ENCODE measurements at regions of chr3 and their contacts with region 1.

Region 1: GRCh38 chr3:183884427-183885296 is at the start of gene PARL:
- DNase-seq: peak; percentile 91 to 96 (median 93)
- H3K4me3 ChIP-seq: peak within 1 kb of the TSS; percentile 94
- H3K4me3 Mint-ChIP-seq: peak within 1 kb of the TSS; percentile 86 to 97 (median 90)
- H3K27ac ChIP-seq: peak within 1 kb of the TSS; percentile 81
- H3K27ac Mint-ChIP-seq: peak within 1 kb of the TSS; percentile 73 to 96 (median 88)
- H3K4me1 ChIP-seq: peaks cover 23% of the 10 kb centered on the region
- H3K4me1 Mint-ChIP-seq: peaks cover 38 to 50% (median 48%) of the 10 kb centered on the region in 3 donors
- H3K27me3 ChIP-seq: no peaks in the 10 kb centered on the region
- H3K27me3 Mint-ChIP-seq: peaks cover 0 to 2% of the 10 kb centered on the region in 2 donors
- total RNA-seq, gene PARL: 95.9 to 98.1 TPM

Region 2: DNA sequence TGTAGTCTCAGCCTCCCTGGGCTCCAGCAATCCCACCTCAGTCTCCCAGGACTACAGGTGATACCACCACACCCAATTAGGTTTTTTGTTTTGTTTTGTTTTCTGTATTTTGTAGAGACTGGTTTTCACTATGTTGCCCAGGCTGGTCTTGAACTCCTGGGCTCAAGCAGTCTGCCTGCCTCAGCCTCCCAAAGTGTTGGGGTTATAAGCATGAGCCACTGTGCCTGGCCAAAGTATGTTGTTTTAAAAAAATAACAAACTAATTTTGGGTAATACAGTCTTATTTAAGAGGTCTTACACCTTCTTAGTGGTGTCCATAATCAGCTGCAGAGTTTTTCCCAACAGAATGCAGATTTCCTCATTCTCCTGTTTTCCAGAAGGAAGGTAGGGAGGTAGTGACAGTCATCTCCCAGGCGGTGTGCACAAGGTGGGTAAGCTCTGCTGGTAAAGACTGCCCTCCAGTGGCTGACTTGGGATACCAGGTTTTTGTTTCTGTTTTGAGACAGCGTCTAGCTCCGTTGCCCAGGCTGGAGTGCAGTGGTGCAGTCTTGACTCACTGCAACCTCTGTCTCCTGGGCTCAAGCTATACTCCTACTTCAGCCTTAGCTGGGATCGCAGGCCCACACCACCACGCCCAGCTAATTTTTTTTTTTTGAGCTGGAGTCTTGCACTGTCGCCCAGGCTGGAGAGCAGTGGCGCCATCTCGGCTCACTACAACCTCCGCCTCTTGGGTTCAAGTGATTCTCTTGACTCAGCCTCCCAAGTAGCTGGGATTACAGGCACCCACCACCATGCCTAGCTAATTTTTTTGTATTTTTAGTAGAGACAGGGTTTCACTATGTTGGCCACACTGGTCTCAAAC is 117.7 kb before region 1 on chr3:
- CTCF ChIA-PET with region 1: interaction called, 12 read pairs
- POLR2A ChIA-PET with region 1: no interaction called
- DNase-seq: peak; percentile 52 to 77 (median 57)
- H3K4me3 ChIP-seq: no peak overlapping the region
- H3K4me3 Mint-ChIP-seq: no peak overlapping the region
- H3K27ac ChIP-seq: no peak overlapping the region
- H3K27ac Mint-ChIP-seq: peak overlapping the region in 5 of 8 donors; percentile 15 to 81 (median 40)
- H3K4me1 ChIP-seq: no peaks in the 10 kb centered on the region
- H3K4me1 Mint-ChIP-seq: peaks cover 9 to 15% (median 12%) of the 10 kb centered on the region in 3 donors
- H3K27me3 ChIP-seq: no peaks in the 10 kb centered on the region
- H3K27me3 Mint-ChIP-seq: no peaks in the 10 kb centered on the region

Region 3: DNA sequence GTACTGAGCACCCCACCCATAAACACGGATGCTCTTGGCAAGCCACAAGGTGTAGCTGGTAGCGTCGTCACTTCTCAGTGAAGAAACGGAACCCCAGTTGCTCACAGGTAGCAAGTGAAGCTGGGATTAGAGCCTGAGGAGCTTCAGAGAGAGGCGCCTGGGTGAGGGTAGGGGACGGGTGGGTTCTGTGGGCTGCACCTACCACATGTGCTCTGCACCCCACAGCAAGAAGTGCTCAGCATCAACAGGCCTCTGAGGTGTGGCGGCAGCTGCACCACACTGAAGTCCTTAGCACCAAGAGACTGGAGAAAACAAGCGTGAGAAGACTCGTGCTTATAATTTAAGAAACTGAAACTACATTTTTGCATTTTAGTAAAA is 69.1 kb before region 1 on chr3:
- CTCF ChIA-PET with region 1: interaction called, 13 read pairs
- POLR2A ChIA-PET with region 1: no interaction called
- DNase-seq: peak in 2 of 5 donors; percentile 22 to 61
- H3K4me3 ChIP-seq: peak overlapping the region; percentile 15
- H3K4me3 Mint-ChIP-seq: peak overlapping the region; percentile 44 to 81 (median 75)
- H3K27ac ChIP-seq: peak overlapping the region; percentile 51
- H3K27ac Mint-ChIP-seq: peak overlapping the region; percentile 77 to 96 (median 90)
- H3K4me1 ChIP-seq: peaks cover 13% of the 10 kb centered on the region
- H3K4me1 Mint-ChIP-seq: peaks cover 19 to 28% (median 24%) of the 10 kb centered on the region in 3 donors
- H3K27me3 ChIP-seq: no peaks in the 10 kb centered on the region
- H3K27me3 Mint-ChIP-seq: no peaks in the 10 kb centered on the region

Region 4: DNA sequence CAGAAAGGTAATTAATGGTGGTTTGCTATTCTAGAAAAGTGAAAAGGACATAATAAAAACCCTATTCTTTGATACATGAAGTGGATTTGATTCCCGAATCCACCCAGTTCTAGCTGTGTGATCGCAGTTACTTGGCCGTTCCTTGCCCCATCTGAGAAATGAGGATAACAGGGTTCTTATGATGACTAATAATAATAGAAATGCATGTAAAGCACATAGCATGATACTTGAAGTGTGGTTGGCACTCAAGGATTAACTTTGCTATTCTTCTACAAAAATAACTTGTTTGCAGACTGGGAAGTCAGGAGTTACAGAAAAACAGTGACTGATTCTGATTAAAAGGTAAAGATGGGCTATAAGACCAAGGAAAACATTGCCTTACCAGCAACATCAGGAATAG is 26.8 kb before region 1 on chr3:
- CTCF ChIA-PET with region 1: interaction called, 10 read pairs
- POLR2A ChIA-PET with region 1: no interaction called
- DNase-seq: no peak
- H3K4me3 ChIP-seq: no peak overlapping the region
- H3K4me3 Mint-ChIP-seq: no peak overlapping the region
- H3K27ac ChIP-seq: no peak overlapping the region
- H3K27ac Mint-ChIP-seq: peak overlapping the region in 4 of 8 donors; percentile 8 to 81 (median 60)
- H3K4me1 ChIP-seq: no peaks in the 10 kb centered on the region
- H3K4me1 Mint-ChIP-seq: peaks cover 0 to 17% (median 13%) of the 10 kb centered on the region in 3 donors
- H3K27me3 ChIP-seq: no peaks in the 10 kb centered on the region
- H3K27me3 Mint-ChIP-seq: no peaks in the 10 kb centered on the region

Region 5: GRCh38 chr3:183895296-183895695 is 10.6 kb after region 1 on chr3:
- CTCF ChIA-PET with region 1: interaction called, 14 read pairs
- POLR2A ChIA-PET with region 1: interaction called, 3 read pairs
- DNase-seq: peak in 3 of 5 donors; percentile 44 to 63 (median 46)
- H3K4me3 ChIP-seq: no peak overlapping the region
- H3K4me3 Mint-ChIP-seq: no peak overlapping the region
- H3K27ac ChIP-seq: no peak overlapping the region
- H3K27ac Mint-ChIP-seq: no peak overlapping the region
- H3K4me1 ChIP-seq: peaks cover 4% of the 10 kb centered on the region
- H3K4me1 Mint-ChIP-seq: peaks cover 0 to 4% (median 3%) of the 10 kb centered on the region in 3 donors
- H3K27me3 ChIP-seq: no peaks in the 10 kb centered on the region
- H3K27me3 Mint-ChIP-seq: peaks cover 14 to 44% of the 10 kb centered on the region in 2 donors